ENCODE measurements at regions of chr7 and their contacts with region 1.

Region 1: DNA sequence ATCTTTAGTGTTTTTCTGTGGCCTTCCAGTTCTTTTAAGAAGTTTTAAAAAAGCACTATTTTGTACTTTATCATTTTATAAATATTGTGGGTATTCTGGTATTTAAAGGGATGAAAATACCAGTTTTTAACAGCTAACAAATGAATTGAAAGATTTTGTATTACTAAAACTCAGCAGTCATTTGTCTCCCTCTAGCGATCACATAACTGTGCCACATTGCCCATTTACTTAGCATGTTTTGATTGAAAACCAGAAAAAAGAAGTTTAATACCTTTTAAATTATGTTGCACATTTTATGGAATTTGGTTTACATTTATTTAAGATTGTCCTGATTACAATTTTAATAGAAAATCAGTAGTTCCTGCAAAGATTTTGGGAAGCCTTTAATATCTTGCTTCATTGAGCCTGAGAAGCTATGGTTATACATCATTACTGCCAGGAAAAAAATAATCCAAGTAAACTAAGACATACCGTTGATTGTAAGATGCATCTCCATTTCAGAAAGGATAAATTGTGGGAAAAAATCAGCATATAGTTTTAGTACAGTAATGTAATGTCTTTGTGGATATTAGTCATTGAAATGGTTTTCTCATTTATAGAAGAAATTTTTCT is 34.9 kb downstream of the TAX1BP1 start:
- DNase-seq: peak; percentile 26
- H3K4me3 Mint-ChIP-seq: no peak overlapping the region
- H3K27ac Mint-ChIP-seq: no peak overlapping the region
- H3K4me1 Mint-ChIP-seq: peaks cover 25% of the 10 kb centered on the region
- H3K27me3 Mint-ChIP-seq: no peaks in the 10 kb centered on the region
- CTCF ChIP-seq: peak; percentile 78

Region 2: DNA sequence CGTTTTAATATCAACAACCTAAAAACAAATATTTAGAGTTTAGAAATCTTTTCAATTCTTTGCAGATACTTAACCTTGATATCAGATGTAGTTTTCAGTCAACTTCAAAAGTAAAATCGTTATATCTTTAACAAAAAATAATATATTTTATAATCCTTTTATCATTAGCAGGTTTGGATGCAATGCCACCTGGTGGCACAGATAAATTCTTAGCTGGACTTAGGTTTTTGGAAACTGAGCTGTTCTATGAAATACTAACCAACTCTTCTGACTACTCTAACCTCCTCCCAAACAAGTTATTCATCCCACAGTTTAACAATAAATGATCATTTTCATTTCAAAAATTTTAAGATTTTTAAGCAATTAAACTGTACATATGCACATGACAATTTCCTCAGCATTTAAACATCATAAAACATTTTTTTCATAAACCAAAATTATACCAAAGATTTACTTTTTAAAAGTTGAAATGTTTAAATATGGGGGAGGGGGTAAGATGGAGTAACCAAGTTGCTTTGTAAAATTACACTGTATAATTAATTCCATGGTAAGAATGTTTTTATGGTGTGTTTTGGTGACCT is 169.0 kb before region 1 on chr7:
- CTCF ChIA-PET with region 1: interaction called, 12 read pairs
- intact Hi-C with region 1: no loop called
- DNase-seq: peak; percentile 35
- H3K4me3 Mint-ChIP-seq: peak overlapping the region; percentile 9
- H3K27ac Mint-ChIP-seq: peak overlapping the region; percentile 55
- H3K4me1 Mint-ChIP-seq: peaks cover 26% of the 10 kb centered on the region
- H3K27me3 Mint-ChIP-seq: no peaks in the 10 kb centered on the region
- CTCF ChIP-seq: peak; percentile 62

Region 3: GRCh38 chr7:27689591-27690164 is 85.1 kb before region 1 on chr7:
- CTCF ChIA-PET with region 1: interaction called, 15 read pairs
- intact Hi-C with region 1: loop called (anchors 1 kb)
- DNase-seq: peak; percentile 69
- H3K4me3 Mint-ChIP-seq: no peak overlapping the region
- H3K27ac Mint-ChIP-seq: no peak overlapping the region
- H3K4me1 Mint-ChIP-seq: peaks cover 26% of the 10 kb centered on the region
- H3K27me3 Mint-ChIP-seq: no peaks in the 10 kb centered on the region
- CTCF ChIP-seq: peak; percentile 74

Region 4: GRCh38 chr7:27739909-27740448 is 34.8 kb before region 1 on chr7 and contains the start of gene TAX1BP1:
- CTCF ChIA-PET with region 1: interaction called, 31 read pairs
- intact Hi-C with region 1: loop called (anchors 1 kb)
- DNase-seq: peak; percentile 99
- H3K4me3 Mint-ChIP-seq: peak within 1 kb of the TSS; percentile 95
- H3K27ac Mint-ChIP-seq: peak within 1 kb of the TSS; percentile 89
- H3K4me1 Mint-ChIP-seq: peaks cover 52% of the 10 kb centered on the region
- H3K27me3 Mint-ChIP-seq: no peaks in the 10 kb centered on the region
- CTCF ChIP-seq: no peak
- total RNA-seq, gene TAX1BP1: 190 TPM in 2 replicates

Region 5: DNA sequence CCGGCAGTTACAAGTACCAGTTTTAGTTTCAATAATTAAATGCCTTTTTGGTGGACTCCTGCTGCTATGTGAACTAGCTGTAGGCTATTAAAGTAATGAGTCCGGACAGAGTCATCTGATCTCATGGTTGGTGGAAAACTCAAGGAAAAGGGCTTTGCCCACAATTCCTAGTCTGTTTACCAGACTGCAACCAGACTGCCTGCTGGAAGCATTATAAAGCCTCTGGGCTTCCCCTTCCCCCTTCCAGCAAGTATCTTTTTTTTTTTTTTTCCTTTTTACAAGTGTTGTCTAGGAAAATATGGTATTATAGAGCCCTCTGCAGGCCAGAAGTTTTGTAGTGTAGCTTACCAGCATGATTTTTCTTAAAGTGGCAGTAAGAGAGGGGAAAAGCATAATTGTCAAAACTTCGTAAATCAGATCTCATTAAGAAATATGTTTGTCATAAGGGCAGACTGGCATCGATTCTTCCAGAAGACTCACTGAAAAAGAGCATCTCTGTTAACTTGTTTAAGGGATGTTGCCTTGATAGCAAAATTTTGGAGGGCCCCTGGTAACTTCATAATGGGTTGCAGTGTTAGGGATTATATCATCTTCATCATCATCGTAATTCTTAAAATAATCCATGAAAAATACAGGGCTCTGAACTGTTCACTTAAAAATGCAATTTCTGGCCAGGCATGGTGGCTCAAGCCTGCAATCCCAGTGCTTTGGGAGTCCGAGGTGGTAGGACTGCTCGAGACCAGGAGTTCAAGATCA is 146.4 kb after region 1 on chr7:
- CTCF ChIA-PET with region 1: interaction called, 12 read pairs
- intact Hi-C with region 1: loop called (anchors 10 kb)
- DNase-seq: peak; percentile 70
- H3K4me3 Mint-ChIP-seq: no peak overlapping the region
- H3K27ac Mint-ChIP-seq: no peak overlapping the region
- H3K4me1 Mint-ChIP-seq: peaks cover 38% of the 10 kb centered on the region
- H3K27me3 Mint-ChIP-seq: no peaks in the 10 kb centered on the region
- CTCF ChIP-seq: peak; percentile 52

Measured in Calu3 (cell line).